ENCODE measurements at regions of chr15 and their contacts with region 1.

Region 1: DNA sequence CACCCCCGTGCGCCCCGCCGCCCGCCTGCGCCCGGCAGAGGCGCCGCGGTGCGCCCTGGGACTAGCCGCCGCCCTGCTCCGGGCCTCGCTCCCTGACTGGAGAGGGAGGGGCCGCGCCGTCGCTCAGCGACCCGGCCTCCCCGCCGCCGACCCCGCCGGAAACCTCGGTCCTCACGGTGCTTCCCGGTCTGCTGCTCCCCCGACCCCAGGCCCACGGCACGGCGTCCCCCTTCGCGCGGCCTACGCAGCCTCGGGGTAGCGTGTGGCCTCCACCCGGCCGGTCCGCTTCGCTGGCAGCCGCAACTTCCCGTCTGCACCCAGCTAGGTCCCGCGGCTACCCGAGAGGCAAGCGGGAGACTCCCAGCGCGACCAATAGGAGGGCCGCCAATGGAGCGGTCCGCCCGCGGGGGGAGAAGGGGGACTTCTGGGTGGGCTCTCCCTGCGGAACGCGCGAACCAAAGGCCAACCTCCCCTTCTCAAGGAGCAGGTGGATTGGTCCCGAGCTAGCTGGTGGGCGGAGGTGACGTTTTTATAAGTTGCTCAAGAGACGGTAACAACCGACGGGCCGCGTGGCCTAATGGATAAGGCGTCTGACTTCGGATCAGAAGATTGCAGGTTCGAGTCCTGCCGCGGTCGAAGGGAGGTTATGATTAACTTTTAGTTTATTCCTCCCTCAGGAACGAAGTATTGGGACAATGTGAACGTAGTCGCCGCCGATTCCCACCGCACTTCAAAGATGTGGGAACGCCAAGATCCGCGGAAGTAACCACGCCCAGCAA is at the start of gene POLG:
- DNase-seq: peak; percentile 98 to 99 (median 99)
- ATAC-seq: peak; percentile 89
- H3K4me3 ChIP-seq: peak within 1 kb of the TSS; percentile 57 to 72
- H3K4me3 Mint-ChIP-seq: peak within 1 kb of the TSS; percentile 89
- H3K27ac ChIP-seq: peak within 1 kb of the TSS; percentile 68 to 76
- H3K27ac Mint-ChIP-seq: peak within 1 kb of the TSS; percentile 99
- H3K4me1 ChIP-seq: peaks cover 56% of the 10 kb centered on the region
- H3K4me1 Mint-ChIP-seq: peaks cover 46% of the 10 kb centered on the region
- H3K27me3 ChIP-seq: no peaks in the 10 kb centered on the region
- H3K27me3 Mint-ChIP-seq: no peaks in the 10 kb centered on the region
- CTCF ChIP-seq: no peak
- total RNA-seq, gene POLG: 147 to 158 TPM

Region 2: DNA sequence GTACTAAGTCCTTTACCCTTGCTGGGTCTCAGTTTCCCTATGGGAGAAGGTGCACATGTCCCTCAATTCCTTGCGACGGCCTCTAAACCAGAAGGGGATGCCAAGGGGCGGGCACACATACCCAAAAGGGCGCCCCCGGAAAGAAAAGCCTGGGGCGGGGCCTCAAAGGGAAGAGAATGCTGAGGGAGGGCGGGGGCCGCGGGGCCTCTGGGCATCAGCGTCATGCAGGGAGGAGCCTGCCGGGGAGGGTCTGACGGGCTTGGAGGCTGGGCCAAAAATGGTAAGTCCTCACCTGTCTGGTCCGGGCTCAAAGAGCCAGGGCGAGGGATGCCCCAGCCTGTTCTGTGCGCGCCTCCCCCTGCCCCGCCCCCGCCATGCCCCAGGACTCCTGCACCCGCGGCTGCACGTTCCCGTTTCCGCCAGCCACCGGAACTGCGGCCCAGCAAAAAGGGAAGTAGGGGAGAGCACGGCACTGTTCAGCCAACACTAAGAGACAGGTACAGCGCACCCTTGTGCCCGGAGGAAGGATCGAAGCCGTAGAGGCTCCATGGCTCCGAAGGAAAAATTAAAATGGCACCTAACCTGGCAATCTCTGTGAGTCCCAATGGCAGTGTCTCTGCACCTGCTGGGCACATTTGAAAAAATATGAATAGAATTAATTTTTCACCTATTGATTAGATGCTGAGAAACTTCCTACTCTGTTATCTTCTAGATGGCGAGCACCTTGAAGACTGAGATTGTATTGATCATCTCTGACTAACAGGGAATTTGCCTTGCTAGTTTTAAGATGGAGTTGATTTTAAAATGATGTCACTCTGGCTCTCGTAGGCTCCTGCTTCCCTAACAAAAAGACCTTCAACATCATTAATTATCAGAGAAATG is 788.2 kb before region 1 on chr15 and contains the start of gene DET1:
- CTCF ChIA-PET with region 1: no interaction called
- POLR2A ChIA-PET with region 1: no interaction called
- intact Hi-C with region 1: loop called (anchors 2 to 5 kb)
- DNase-seq: peak; percentile 87 to 98 (median 94)
- ATAC-seq: peak; percentile 91
- H3K4me3 ChIP-seq: peak within 1 kb of the TSS; percentile 60 to 62
- H3K4me3 Mint-ChIP-seq: peak within 1 kb of the TSS; percentile 91
- H3K27ac ChIP-seq: peak within 1 kb of the TSS; percentile 72 to 80
- H3K27ac Mint-ChIP-seq: peak within 1 kb of the TSS; percentile 96
- H3K4me1 ChIP-seq: peaks cover 6% of the 10 kb centered on the region
- H3K4me1 Mint-ChIP-seq: peaks cover 18% of the 10 kb centered on the region
- H3K27me3 ChIP-seq: no peaks in the 10 kb centered on the region
- H3K27me3 Mint-ChIP-seq: no peaks in the 10 kb centered on the region
- CTCF ChIP-seq: peak; percentile 70
- total RNA-seq, gene DET1: 1.4 to 2.0 TPM

Region 3: DNA sequence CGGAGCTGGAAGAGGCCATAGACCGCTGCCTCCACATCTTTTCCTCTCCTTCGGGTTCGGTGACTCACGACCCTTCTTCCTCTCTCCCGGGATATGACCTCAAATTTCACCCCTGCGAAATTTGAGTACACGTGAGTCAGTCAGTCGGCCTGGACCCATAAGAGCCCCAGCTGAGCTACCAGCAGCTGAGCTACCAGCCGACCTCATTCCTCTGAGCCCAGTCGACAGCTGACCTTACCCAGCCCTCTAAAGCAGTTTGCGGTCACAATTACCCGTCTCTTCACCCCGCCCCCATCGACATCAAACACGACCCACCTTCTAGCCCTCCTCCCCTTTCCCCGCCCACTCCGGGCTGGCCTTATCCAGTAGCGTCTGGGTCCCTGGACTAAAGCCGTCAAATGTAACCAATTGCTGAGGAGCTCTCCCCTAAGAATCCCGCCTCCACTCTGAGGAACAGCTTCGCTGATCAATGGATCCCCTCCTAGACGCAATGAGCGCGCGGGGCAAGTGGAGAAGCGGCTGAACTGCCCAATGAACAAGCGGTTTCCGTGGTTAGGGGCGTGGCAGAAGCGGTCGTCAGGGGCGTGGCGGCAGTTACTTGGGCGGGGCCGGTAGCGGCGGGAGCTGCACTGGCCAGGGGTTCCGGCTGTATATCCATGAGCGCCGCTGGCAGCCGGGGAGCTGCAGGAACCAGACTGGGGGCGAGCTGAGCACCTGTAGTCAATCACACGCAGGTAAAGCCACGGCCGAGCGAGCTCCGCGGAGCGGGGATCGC is 246.7 kb before region 1 on chr15 and contains the start of gene ABHD2:
- CTCF ChIA-PET with region 1: no interaction called
- POLR2A ChIA-PET with region 1: no interaction called
- intact Hi-C with region 1: loop called (anchors 1 to 10 kb)
- DNase-seq: peak; percentile 94 to 99 (median 98)
- ATAC-seq: peak; percentile 94
- H3K4me3 ChIP-seq: peak within 1 kb of the TSS; percentile 65 to 87
- H3K4me3 Mint-ChIP-seq: no peak within 1 kb of the TSS
- H3K27ac ChIP-seq: peak within 1 kb of the TSS; percentile 50 to 69
- H3K27ac Mint-ChIP-seq: peak within 1 kb of the TSS; percentile 70
- H3K4me1 ChIP-seq: peaks cover 43% of the 10 kb centered on the region
- H3K4me1 Mint-ChIP-seq: peaks cover 35% of the 10 kb centered on the region
- H3K27me3 ChIP-seq: no peaks in the 10 kb centered on the region
- H3K27me3 Mint-ChIP-seq: no peaks in the 10 kb centered on the region
- CTCF ChIP-seq: no peak
- total RNA-seq, gene ABHD2: 22.2 to 25.7 TPM

Region 4: GRCh38 chr15:89315375-89315929 is 19.2 kb before region 1 on chr15:
- CTCF ChIA-PET with region 1: interaction called, 3 read pairs
- POLR2A ChIA-PET with region 1: interaction called, 3 read pairs
- intact Hi-C with region 1: loop called in 1 of 2 experiments (anchors 1 kb)
- DNase-seq: no peak
- ATAC-seq: no peak
- H3K4me3 ChIP-seq: no peak overlapping the region
- H3K4me3 Mint-ChIP-seq: no peak overlapping the region
- H3K27ac ChIP-seq: no peak overlapping the region
- H3K27ac Mint-ChIP-seq: peak overlapping the region; percentile 66
- H3K4me1 ChIP-seq: no peaks in the 10 kb centered on the region
- H3K4me1 Mint-ChIP-seq: peaks cover 11% of the 10 kb centered on the region
- H3K27me3 ChIP-seq: no peaks in the 10 kb centered on the region
- H3K27me3 Mint-ChIP-seq: no peaks in the 10 kb centered on the region
- CTCF ChIP-seq: no peak

Region 5: GRCh38 chr15:89358755-89359439 is 24.2 kb after region 1 on chr15:
- CTCF ChIA-PET with region 1: interaction called, 17 read pairs
- POLR2A ChIA-PET with region 1: interaction called, 4 read pairs
- intact Hi-C with region 1: loop called (anchors 1 kb)
- DNase-seq: peak; percentile 71 to 90 (median 79)
- ATAC-seq: peak; percentile 87
- H3K4me3 ChIP-seq: peak overlapping the region; percentile 52 to 56
- H3K4me3 Mint-ChIP-seq: peak overlapping the region; percentile 81
- H3K27ac ChIP-seq: no peak overlapping the region
- H3K27ac Mint-ChIP-seq: no peak overlapping the region
- H3K4me1 ChIP-seq: peaks cover 8% of the 10 kb centered on the region
- H3K4me1 Mint-ChIP-seq: peaks cover 16% of the 10 kb centered on the region
- H3K27me3 ChIP-seq: peaks cover 46 to 55% of the 10 kb centered on the region in 2 experiments
- H3K27me3 Mint-ChIP-seq: peaks cover 77% of the 10 kb centered on the region
- CTCF ChIP-seq: peak; percentile 96

Region 6: DNA sequence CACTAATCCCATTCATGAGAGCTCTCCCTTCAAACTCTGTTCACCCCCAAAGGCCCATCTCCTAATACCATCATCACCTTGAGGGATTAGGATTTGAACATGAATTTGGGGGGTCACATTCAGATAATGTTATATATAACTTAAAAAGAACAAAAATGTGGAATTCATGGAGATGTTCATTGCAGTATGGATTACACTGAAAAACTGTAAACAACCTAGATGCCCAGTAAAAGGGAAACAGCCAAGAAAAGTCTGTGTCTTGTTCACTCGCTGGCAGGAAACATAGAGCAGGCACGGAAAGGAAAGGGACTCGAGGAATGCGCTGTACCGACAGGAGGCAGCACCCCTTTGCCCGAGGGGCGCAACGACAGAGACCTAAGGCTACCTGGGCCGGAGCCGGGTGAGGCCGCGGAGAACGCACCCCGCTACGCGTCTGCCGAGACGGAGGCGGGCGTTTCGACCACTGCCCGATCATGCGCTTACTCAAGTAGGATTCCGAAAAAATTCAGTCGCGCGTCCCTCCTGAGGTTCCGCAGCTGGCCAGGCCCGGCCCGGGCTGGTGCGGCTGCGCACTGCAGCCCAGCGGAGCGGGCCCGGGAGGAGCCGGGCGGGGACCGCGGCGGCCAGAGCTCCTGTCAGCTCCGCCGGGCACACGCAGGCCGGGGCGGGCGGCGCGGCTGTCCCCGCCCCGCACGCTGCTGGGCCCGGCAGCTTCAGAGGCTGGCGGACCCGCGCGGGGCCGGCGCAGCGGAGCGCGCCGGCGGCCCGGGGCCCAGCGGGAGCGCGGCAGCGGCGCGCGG is 1567.5 kb after region 1 on chr15:
- CTCF ChIA-PET with region 1: no interaction called
- POLR2A ChIA-PET with region 1: no interaction called
- intact Hi-C with region 1: loop called in 1 of 2 experiments (anchors 10 kb)
- DNase-seq: peak; percentile 42 to 88 (median 70)
- ATAC-seq: peak; percentile 69
- H3K4me3 ChIP-seq: peak overlapping the region; percentile 65 to 89
- H3K4me3 Mint-ChIP-seq: peak overlapping the region; percentile 92
- H3K27ac ChIP-seq: peak overlapping the region; percentile 65 to 73
- H3K27ac Mint-ChIP-seq: peak overlapping the region; percentile 93
- H3K4me1 ChIP-seq: peaks cover 15% of the 10 kb centered on the region
- H3K4me1 Mint-ChIP-seq: peaks cover 28% of the 10 kb centered on the region
- H3K27me3 ChIP-seq: no peaks in the 10 kb centered on the region
- H3K27me3 Mint-ChIP-seq: no peaks in the 10 kb centered on the region
- CTCF ChIP-seq: peak; percentile 84